Common myeloid progenitor, CD34-positive (primary cell): ENCODE measurements at regions of chr2 and their contacts with region 1.

Region 1: DNA sequence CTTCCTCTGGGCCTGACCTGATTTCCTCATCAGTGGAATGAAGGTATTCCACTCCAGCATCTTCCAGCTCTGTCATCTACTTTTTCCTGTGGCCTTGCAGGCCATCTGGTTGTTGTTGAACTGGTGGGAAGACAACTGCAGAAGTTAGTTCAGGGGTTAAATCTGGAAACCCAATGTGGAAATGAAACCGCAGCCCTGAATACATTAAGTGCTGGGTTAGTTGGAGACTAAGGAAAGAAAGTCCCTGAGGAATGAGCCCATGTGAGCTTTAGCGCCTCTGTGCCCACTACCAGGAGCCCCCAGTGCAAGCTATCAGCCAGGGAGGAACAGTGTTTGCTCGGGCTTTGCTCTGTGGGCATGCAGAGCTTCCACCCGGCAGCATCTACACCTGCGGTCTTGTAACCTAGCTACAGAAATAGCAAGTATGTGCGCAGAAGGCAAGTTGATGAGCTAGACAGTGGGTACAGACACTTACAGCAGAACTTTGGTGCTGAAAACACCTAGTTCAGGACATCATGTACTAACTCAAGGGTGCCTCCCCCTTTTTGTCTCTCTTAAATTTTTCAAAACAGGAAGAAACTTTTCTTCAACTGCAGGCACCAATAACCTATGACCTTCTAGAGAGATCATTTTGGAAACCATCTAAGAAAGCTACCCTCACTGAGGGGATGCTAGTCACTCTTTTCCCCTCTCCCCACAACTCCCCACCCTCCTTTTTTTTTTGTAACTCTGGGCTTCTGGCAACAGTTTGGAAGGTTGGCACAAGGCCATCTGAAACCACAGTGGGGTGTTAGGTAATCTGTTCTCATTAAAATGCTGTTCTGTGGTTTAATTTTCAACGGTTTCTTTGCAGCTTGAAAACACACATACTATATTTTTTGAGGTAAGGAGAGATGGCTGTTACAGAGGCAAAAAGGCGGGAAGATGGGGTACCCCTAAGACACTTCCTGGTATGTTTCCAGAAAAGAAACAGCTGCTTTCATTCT is 18.3 kb upstream of the CXCR4 start:
- DNase-seq: peak; percentile 83 to 97 (median 94)
- H3K4me3 ChIP-seq: no peak overlapping the region
- H3K27ac ChIP-seq: peak overlapping the region; percentile 5 to 69
- H3K4me1 ChIP-seq: peaks cover 56 to 94% (median 78%) of the 10 kb centered on the region in 4 experiments
- H3K27me3 ChIP-seq: no peaks in the 10 kb centered on the region

Region 2: DNA sequence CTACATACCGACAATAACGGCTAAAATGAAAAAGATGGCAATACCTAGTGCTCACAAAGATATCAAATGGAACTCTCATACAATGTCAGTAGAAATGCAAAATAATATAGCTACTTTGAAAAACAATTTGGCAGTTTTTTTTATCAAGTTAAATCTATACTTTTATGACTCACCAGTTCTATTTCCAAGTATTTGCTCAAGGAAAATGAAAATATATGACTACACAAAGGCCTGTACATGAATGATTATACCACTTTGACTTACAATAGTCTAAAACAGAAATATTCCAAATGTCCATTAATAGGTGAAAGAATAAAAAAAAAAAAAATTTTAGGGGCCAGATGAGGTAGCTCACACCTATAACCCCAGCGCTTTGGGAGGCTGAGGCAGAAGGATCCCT is 824.9 kb before region 1 on chr2:
- CTCF ChIA-PET with region 1: no interaction called
- POLR2A ChIA-PET with region 1: no interaction called
- DNase-seq: no peak
- H3K4me3 ChIP-seq: no peak overlapping the region
- H3K27ac ChIP-seq: no peak overlapping the region
- H3K4me1 ChIP-seq: no peaks in the 10 kb centered on the region
- H3K27me3 ChIP-seq: no peaks in the 10 kb centered on the region

Region 3: GRCh38 chr2:136117909-136118818 is 18.1 kb before region 1 on chr2 and contains the start of gene CXCR4:
- CTCF ChIA-PET with region 1: interaction called, 18 read pairs
- POLR2A ChIA-PET with region 1: interaction called, 11 read pairs
- DNase-seq: peak; percentile 73 to 82 (median 81)
- H3K4me3 ChIP-seq: peak within 1 kb of the TSS; percentile 61 to 91 (median 85)
- H3K27ac ChIP-seq: peak within 1 kb of the TSS; percentile 42 to 76
- H3K4me1 ChIP-seq: peaks cover 40 to 61% (median 53%) of the 10 kb centered on the region in 4 experiments
- H3K27me3 ChIP-seq: no peaks in the 10 kb centered on the region

Region 4: DNA sequence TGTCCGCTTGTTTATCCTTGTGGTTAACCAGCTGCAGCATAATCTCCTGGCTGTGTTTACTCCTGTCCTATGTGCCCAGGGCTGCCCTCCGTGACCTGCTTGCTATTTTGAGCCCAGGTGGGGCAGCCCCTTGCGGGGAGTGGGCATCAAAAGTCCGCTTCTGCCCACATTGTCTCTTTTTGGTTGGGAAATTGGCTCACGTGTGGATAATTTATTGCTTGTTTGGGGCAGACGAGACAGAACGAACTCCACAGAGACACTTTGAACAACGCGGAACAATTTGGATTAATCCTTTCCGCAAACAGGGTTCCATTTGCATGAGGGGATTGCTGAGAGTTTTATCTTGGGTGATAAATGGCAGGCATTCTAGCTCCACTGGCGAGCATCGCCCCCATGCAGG is 10.2 kb before region 1 on chr2:
- CTCF ChIA-PET with region 1: interaction called, 18 read pairs
- POLR2A ChIA-PET with region 1: no interaction called
- DNase-seq: no peak
- H3K4me3 ChIP-seq: peak overlapping the region in 1 of 7 experiments; percentile 19
- H3K27ac ChIP-seq: no peak overlapping the region
- H3K4me1 ChIP-seq: peaks cover 53 to 74% (median 59%) of the 10 kb centered on the region in 4 experiments
- H3K27me3 ChIP-seq: no peaks in the 10 kb centered on the region